ENCODE measurements at regions of chr9 and their contacts with region 1.

Region 1: GRCh38 chr9:127021664-127022363 is 100.6 kb downstream of the ANGPTL2 start:
- DNase-seq: peak; percentile 92

Region 2: GRCh38 chr9:126985870-126986498 is 35.8 kb before region 1 on chr9:
- intact Hi-C with region 1: loop called (anchors 5 kb)
- DNase-seq: no peak

Region 3: DNA sequence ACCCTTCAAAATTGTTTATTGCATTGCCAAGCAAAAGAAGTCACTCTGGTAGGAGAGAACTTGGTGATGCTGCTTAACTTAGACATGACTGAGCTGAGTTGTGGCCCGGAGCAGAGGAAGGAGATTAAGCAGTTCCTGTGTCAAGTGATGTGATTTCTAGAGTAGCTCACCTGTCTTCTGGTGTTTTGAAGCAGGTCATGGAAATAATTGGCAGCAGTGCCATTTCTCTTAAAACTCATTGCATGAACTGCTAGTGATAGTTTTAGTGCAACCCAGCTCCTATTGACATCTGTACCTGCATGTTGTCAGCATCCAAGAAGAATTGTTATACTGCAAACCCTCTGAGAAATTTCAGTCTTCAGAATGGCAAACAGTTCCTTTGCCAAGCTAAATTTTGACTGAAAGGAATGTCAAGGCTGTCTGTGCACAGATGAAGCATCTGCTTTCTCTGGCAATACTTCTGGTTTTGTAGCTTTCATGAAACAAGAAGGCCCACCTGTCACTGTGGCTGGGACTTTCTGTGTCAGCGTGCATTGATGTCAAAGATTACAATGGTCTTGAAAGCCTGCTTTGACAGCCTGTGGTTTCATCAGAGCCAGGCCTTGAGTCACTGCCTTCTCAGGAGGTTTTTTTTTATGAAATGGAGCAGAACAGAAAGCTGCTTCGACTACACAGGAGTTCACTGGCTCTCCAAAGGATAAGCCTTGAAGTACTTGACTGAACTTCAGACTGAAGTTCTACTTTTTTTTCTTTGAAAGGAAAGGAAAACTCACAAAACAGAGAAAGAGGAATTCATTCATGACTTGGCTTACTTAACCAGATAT is 16.7 kb before region 1 on chr9:
- intact Hi-C with region 1: no loop called
- DNase-seq: no peak

Region 4: GRCh38 chr9:127154390-127155191 is 132.8 kb after region 1 on chr9:
- intact Hi-C with region 1: loop called (anchors 2 kb)
- DNase-seq: no peak

Region 5: DNA sequence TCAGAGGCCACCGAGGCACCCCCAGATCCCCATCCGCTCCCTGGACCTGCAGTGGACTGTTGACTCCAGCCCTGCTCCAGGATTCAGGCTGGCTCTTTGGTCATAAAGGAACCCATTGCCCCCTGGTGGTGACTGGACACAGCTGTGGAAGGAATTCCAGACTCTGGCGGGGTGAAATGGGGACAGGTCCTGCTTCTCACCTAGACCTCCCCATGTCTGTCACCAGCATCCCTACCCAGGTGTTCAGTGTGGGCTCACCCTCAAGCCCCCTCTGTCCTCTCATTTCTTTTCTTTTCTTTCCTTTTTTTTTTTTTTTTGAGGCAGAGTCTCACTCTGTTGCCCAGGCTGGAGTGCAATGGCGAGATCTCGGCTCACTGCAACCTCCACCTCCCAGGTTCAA is 564.7 kb after region 1 on chr9:
- intact Hi-C with region 1: no loop called
- DNase-seq: peak; percentile 86